GM10248 (cell line): ENCODE measurements at regions of chr11 and their contacts with region 1.

Region 1: GRCh38 chr11:7696424-7696823 is 9.9 kb downstream of the OVCH2 start:
- DNase-seq: no peak
- CTCF ChIP-seq: no peak

Region 2: GRCh38 chr11:7098235-7098832 is 598.1 kb before region 1 on chr11:
- CTCF ChIA-PET with region 1: interaction called, 20 read pairs
- POLR2A ChIA-PET with region 1: no interaction called
- DNase-seq: peak; percentile 50
- CTCF ChIP-seq: peak; percentile 66

Region 3: DNA sequence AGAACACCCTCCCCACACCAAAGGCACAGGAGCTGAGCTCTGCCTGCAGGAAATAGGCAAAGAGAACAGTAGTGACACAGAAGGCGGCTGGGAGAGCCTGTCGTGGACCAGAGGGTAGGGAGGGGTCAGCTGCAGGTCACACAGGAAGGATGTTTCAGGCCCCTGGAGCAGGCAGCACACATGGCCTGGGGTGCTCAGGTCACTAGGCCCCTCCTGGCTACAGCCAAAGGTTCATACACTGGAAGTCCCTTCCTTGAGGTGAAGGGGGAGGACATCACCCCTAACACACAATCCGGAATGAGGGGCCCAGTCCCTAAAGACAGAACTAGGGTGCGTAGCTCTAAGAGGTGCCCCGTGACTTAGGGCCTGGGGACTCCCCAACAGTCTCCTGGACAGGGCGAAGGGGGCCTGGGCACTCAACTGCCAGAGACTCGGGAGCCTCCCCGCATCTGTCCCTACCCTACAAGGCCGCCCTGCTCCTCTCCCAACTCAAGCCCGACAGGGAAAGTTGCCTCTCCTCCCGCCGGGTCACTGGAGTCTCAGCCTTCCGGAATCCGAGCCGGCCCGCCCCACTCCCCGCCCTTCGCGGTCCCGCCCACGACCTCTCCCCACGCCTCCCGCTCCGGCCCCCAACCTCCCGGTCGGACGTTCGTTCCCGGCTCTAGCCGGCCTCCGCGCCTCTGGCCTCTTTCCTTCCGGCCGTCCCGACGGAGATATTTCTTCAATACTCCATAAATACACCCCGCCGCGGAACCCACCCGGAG is 23.3 kb before region 1 on chr11 and contains the start of gene CYB5R2:
- CTCF ChIA-PET with region 1: interaction called, 12 read pairs
- POLR2A ChIA-PET with region 1: no interaction called
- DNase-seq: peak; percentile 76
- CTCF ChIP-seq: no peak